Endothelial cell of umbilical vein (primary cell): ENCODE measurements at regions of chrX and their contacts with region 1.

Region 1: DNA sequence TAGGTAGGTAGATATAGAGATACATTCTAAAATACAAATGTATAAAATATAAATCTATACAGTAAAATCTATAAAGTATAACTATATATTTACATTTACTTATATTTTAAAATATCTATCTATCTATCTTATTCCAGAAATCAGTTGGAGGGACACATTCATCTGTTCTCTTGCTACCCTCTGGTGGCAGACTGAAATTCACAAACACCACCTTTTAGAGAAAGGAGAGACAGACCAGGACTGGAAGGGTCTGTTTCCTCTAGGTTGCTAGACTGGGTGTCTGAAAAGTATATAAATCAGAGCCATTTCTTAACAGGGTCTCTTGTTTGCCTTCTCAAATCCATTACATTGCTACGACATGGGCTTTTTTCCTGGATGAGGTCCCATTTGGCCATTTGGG is 343.0 kb downstream of the OPHN1 start:
- DNase-seq: no peak
- H3K4me3 ChIP-seq: no peak overlapping the region
- H3K27ac ChIP-seq: no peak overlapping the region
- H3K4me1 ChIP-seq: no peaks in the 10 kb centered on the region
- H3K27me3 ChIP-seq: no peaks in the 10 kb centered on the region
- CTCF ChIP-seq: no peak
- POLR2A ChIP-seq: no peak

Region 2: DNA sequence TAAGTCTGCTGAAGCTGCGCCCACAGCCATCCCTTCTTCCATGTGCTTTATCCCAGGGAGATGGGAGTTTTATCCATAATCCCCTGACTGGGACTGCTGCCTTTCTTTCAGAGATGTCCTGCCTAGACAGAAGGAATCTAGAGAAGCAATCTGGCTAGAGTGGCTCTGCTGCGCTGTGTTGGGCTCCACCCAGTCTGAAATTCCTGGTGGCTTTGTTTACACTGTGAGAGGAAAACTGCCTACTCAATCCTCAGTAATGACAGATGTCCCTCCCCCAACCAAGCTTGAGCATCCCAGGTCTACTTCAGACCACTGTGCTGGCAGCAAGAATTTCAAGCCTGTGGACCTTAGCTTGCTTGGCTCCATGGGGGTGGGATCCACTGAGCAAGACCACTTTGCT is 663.3 kb before region 1 on chrX:
- CTCF ChIA-PET with region 1: no interaction called
- POLR2A ChIA-PET with region 1: no interaction called
- dilution Hi-C with region 1: no loop called
- intact Hi-C with region 1: no loop called
- DNase-seq: no peak
- H3K4me3 ChIP-seq: no peak overlapping the region
- H3K27ac ChIP-seq: no peak overlapping the region
- H3K4me1 ChIP-seq: no peaks in the 10 kb centered on the region
- H3K27me3 ChIP-seq: no peaks in the 10 kb centered on the region
- CTCF ChIP-seq: no peak
- POLR2A ChIP-seq: no peak

Region 3: GRCh38 chrX:67651437-67652142 is 438.7 kb before region 1 on chrX:
- CTCF ChIA-PET with region 1: no interaction called
- POLR2A ChIA-PET with region 1: no interaction called
- dilution Hi-C with region 1: no loop called
- intact Hi-C with region 1: no loop called
- DNase-seq: no peak
- H3K4me3 ChIP-seq: no peak overlapping the region
- H3K27ac ChIP-seq: no peak overlapping the region
- H3K4me1 ChIP-seq: no peaks in the 10 kb centered on the region
- H3K27me3 ChIP-seq: no peaks in the 10 kb centered on the region
- CTCF ChIP-seq: no peak
- POLR2A ChIP-seq: no peak

Region 4: GRCh38 chrX:68132749-68133148 is 42.5 kb after region 1 on chrX:
- CTCF ChIA-PET with region 1: no interaction called
- POLR2A ChIA-PET with region 1: no interaction called
- dilution Hi-C with region 1: no loop called
- intact Hi-C with region 1: loop called (anchors 1 kb)
- DNase-seq: no peak
- H3K4me3 ChIP-seq: no peak overlapping the region
- H3K27ac ChIP-seq: no peak overlapping the region
- H3K4me1 ChIP-seq: no peaks in the 10 kb centered on the region
- H3K27me3 ChIP-seq: no peaks in the 10 kb centered on the region
- CTCF ChIP-seq: no peak
- POLR2A ChIP-seq: no peak

Region 5: DNA sequence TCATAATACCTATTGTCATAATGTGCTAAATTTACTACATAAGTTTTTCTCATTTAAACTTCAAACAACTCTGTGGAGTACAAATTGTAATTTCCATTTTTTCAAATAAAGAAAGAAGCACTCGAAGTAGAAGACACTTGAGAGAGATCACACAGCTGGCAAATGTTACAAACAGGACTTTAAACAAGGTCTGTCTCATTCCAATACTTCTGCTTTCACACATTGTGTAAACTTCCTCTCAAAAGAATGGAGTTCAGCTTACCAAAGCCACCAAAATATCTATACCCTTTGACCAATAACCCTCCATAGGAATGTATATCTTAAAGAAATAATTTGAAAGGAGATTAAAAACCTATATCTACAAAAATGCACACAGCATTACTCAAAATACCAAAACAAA is 254.8 kb after region 1 on chrX:
- CTCF ChIA-PET with region 1: no interaction called
- POLR2A ChIA-PET with region 1: no interaction called
- dilution Hi-C with region 1: no loop called
- intact Hi-C with region 1: no loop called
- DNase-seq: peak; percentile 3
- H3K4me3 ChIP-seq: no peak overlapping the region
- H3K27ac ChIP-seq: no peak overlapping the region
- H3K4me1 ChIP-seq: no peaks in the 10 kb centered on the region
- H3K27me3 ChIP-seq: no peaks in the 10 kb centered on the region
- CTCF ChIP-seq: no peak
- POLR2A ChIP-seq: no peak